ENCODE measurements at regions of chrX and their contacts with region 1.

Region 1: GRCh38 chrX:41116948-41117347 is 31.7 kb downstream of the USP9X start:
- DNase-seq: peak in 6 of 9 donors; percentile 17 to 38 (median 33)
- ATAC-seq: peak; percentile 66
- H3K4me3 ChIP-seq: no peak overlapping the region
- H3K4me3 Mint-ChIP-seq: peak overlapping the region; percentile 18 to 71 (median 66)
- H3K27ac ChIP-seq: peak overlapping the region; percentile 55
- H3K27ac Mint-ChIP-seq: peak overlapping the region; percentile 23 to 82 (median 75)
- H3K4me1 ChIP-seq: peaks cover 29 to 32% of the 10 kb centered on the region in 2 donors
- H3K4me1 Mint-ChIP-seq: peaks cover 24 to 90% (median 67%) of the 10 kb centered on the region in 7 donors
- H3K27me3 ChIP-seq: no peaks in the 10 kb centered on the region
- H3K27me3 Mint-ChIP-seq: no peaks in the 10 kb centered on the region

Region 2: DNA sequence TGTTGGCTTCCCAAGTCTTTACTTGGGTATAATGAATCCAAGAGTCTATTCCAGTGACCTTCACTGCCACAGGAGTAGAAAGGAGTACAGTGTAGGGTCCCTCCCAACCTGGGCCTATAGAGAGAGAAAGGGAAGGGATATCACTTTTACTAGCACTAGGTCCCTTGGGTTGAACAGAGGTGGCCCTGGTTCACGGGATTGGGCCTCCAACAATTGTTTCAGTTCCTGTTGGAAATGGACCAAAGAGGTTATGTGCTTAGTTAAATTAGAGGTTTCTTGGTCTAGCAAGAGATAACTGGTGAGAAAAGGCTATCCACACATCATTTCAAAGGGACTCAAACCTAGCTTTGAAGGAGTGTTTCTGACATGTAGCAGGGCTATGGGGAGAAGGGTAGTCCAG is 324.5 kb before region 1 on chrX:
- CTCF ChIA-PET with region 1: interaction called, 5 read pairs
- POLR2A ChIA-PET with region 1: no interaction called
- intact Hi-C with region 1: loop called (anchors 1 to 10 kb)
- DNase-seq: no peak
- ATAC-seq: no peak
- H3K4me3 ChIP-seq: no peak overlapping the region
- H3K4me3 Mint-ChIP-seq: no peak overlapping the region
- H3K27ac ChIP-seq: no peak overlapping the region
- H3K27ac Mint-ChIP-seq: no peak overlapping the region
- H3K4me1 ChIP-seq: no peaks in the 10 kb centered on the region
- H3K4me1 Mint-ChIP-seq: peaks cover 0 to 6% (median 0%) of the 10 kb centered on the region in 7 donors
- H3K27me3 ChIP-seq: no peaks in the 10 kb centered on the region
- H3K27me3 Mint-ChIP-seq: peaks cover 0 to 9% (median 0%) of the 10 kb centered on the region in 5 donors

Region 3: DNA sequence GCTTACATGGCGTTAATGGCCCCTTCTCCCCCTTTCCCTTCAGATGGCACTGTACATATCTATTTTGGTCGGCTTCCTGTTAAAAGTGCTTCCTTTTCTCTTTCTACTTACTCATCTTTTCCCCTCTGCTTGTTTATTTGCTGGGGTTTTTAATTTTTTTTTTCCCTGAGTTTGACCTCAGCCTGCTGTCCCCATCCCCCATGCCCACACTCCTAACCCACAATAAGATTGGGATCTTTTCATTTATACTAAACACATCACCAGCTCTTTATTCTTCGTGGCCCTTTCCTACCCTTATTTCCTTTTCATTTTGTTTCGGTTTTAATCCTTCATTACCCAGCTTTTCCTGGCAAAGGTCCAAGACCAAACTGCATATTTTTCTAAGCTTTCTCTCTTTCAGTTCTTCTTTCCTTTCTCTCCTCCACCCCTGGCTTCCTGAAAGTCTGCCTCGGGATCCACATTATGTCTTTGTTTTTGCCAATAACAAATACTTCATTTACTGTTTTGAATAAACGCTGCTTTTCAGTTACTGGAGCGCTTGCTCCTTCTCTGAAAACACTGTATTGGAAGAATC is 183.7 kb before region 1 on chrX:
- CTCF ChIA-PET with region 1: no interaction called
- POLR2A ChIA-PET with region 1: no interaction called
- intact Hi-C with region 1: loop called in 1 of 2 experiments (anchors 5 kb)
- DNase-seq: peak in 7 of 9 donors; percentile 10 to 37 (median 27)
- ATAC-seq: peak; percentile 38
- H3K4me3 ChIP-seq: peak overlapping the region; percentile 51
- H3K4me3 Mint-ChIP-seq: peak overlapping the region; percentile 79 to 91 (median 88)
- H3K27ac ChIP-seq: peak overlapping the region; percentile 59
- H3K27ac Mint-ChIP-seq: peak overlapping the region; percentile 82 to 97 (median 94)
- H3K4me1 ChIP-seq: peaks cover 0 to 10% of the 10 kb centered on the region in 2 donors
- H3K4me1 Mint-ChIP-seq: peaks cover 9 to 34% (median 22%) of the 10 kb centered on the region in 7 donors
- H3K27me3 ChIP-seq: no peaks in the 10 kb centered on the region
- H3K27me3 Mint-ChIP-seq: no peaks in the 10 kb centered on the region

Region 4: DNA sequence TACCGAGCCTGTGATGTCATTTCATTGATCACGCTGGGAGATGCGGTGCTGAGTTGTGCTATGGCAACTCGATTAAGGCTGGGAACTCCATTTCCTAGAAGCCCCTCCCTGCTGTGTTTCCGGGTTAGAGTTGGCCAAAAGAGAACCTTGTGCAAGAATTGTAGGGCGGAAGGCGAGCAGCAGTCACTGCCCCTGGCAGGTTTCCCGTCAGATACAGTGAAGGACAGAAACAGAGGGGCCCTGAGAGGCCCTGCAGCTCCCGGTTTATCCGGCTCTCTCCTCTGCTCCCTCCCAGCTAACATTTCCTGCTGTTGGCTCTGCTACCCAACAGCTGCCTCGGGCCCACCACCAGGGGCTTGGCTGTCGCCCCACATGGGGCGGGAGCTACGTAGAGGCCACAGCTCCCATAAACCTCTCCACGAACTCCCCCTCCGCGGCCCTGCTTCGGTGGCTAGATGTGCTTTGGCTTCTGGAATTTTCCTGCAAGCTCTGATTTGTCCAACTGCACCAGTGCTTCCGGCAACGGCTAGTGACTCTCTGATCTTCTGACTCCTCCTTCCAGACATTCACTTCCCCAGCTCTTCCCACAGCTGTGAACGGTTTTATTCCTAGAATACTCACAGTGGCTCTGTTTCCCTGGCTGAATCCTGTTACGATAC is 106.6 kb before region 1 on chrX:
- CTCF ChIA-PET with region 1: interaction called, 5 read pairs
- POLR2A ChIA-PET with region 1: interaction called, 3 read pairs
- intact Hi-C with region 1: loop called (anchors 1 to 10 kb)
- DNase-seq: peak; percentile 8 to 71 (median 59)
- ATAC-seq: peak; percentile 93
- H3K4me3 ChIP-seq: peak overlapping the region; percentile 32
- H3K4me3 Mint-ChIP-seq: peak overlapping the region; percentile 67 to 81 (median 76)
- H3K27ac ChIP-seq: peak overlapping the region; percentile 68
- H3K27ac Mint-ChIP-seq: peak overlapping the region; percentile 88 to 94 (median 91)
- H3K4me1 ChIP-seq: peaks cover 7% of the 10 kb centered on the region in 2 donors
- H3K4me1 Mint-ChIP-seq: peaks cover 13 to 30% (median 21%) of the 10 kb centered on the region in 7 donors
- H3K27me3 ChIP-seq: no peaks in the 10 kb centered on the region
- H3K27me3 Mint-ChIP-seq: peaks cover 0 to 3% (median 0%) of the 10 kb centered on the region in 5 donors

Region 5: GRCh38 chrX:41131766-41132165 is 14.8 kb after region 1 on chrX:
- CTCF ChIA-PET with region 1: no interaction called
- POLR2A ChIA-PET with region 1: no interaction called
- intact Hi-C with region 1: loop called in 1 of 2 experiments (anchors 2 kb)
- DNase-seq: no peak
- ATAC-seq: no peak
- H3K4me3 ChIP-seq: no peak overlapping the region
- H3K4me3 Mint-ChIP-seq: no peak overlapping the region
- H3K27ac ChIP-seq: no peak overlapping the region
- H3K27ac Mint-ChIP-seq: peak overlapping the region in 1 of 9 donors; percentile 19
- H3K4me1 ChIP-seq: no peaks in the 10 kb centered on the region
- H3K4me1 Mint-ChIP-seq: peaks cover 0 to 32% (median 17%) of the 10 kb centered on the region in 7 donors
- H3K27me3 ChIP-seq: no peaks in the 10 kb centered on the region
- H3K27me3 Mint-ChIP-seq: no peaks in the 10 kb centered on the region

Region 6: GRCh38 chrX:41198406-41198805 is 81.5 kb after region 1 on chrX:
- CTCF ChIA-PET with region 1: no interaction called
- POLR2A ChIA-PET with region 1: no interaction called
- intact Hi-C with region 1: no loop called
- DNase-seq: no peak
- ATAC-seq: no peak
- H3K4me3 ChIP-seq: no peak overlapping the region
- H3K4me3 Mint-ChIP-seq: no peak overlapping the region
- H3K27ac ChIP-seq: no peak overlapping the region
- H3K27ac Mint-ChIP-seq: no peak overlapping the region
- H3K4me1 ChIP-seq: no peaks in the 10 kb centered on the region
- H3K4me1 Mint-ChIP-seq: peaks cover 0 to 4% (median 0%) of the 10 kb centered on the region in 7 donors
- H3K27me3 ChIP-seq: no peaks in the 10 kb centered on the region
- H3K27me3 Mint-ChIP-seq: no peaks in the 10 kb centered on the region

Measured in naive thymus-derived CD4-positive, alpha-beta T cell (primary cell).